Heart left ventricle (tissue), 16 donors: ENCODE measurements at regions of chr9 and their contacts with region 1.

Region 1: GRCh38 chr9:118209343-118209742 is 505.1 kb downstream of the TLR4 start:
- DNase-seq: no peak
- ATAC-seq: no peak
- H3K4me3 ChIP-seq: no peak overlapping the region
- H3K27ac ChIP-seq: no peak overlapping the region
- H3K4me1 ChIP-seq: no peaks in the 10 kb centered on the region
- H3K27me3 ChIP-seq: peaks cover 0 to 9% (median 0%) of the 10 kb centered on the region in 9 donors
- CTCF ChIP-seq: no peak
- POLR2A ChIP-seq: no peak

Region 2: GRCh38 chr9:117625154-117625553 is 584.2 kb before region 1 on chr9:
- intact Hi-C with region 1: loop called in 1 of 10 experiments (anchors 5 kb)
- DNase-seq: no peak
- ATAC-seq: no peak
- H3K4me3 ChIP-seq: no peak overlapping the region
- H3K27ac ChIP-seq: no peak overlapping the region
- H3K4me1 ChIP-seq: no peaks in the 10 kb centered on the region
- H3K27me3 ChIP-seq: no peaks in the 10 kb centered on the region
- CTCF ChIP-seq: no peak
- POLR2A ChIP-seq: no peak